ENCODE measurements at regions of chr16 and their contacts with region 1.

Region 1: DNA sequence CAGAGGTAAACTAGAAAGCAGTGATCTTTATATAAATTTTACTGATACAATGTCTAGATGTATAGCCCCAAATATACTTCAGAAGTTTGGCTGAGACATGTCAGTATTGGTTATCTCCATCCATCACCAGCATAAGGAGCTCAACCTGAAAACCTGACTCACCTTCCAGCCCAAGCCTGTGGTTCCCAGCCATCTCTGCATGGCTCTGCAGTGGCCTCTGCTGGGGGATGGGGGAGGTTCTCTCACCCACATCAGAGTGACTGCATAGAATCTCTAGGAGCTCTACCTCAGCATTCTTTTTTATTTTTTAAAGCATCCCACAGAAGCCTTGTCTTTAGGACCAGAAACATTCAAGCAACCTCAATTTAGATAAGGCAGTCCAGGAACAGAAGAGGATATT is 27.3 kb downstream of the USP7 start:
- DNase-seq: peak; percentile 68
- H3K4me3 ChIP-seq: no peak overlapping the region; a peak in 1 of 4 replicates
- H3K27ac ChIP-seq: no peak overlapping the region
- H3K4me1 ChIP-seq: peaks cover 0 to 7% of the 10 kb centered on the region in 2 experiments; a peak in 1 of 4 replicates
- H3K27me3 ChIP-seq: no peaks in the 10 kb centered on the region
- CTCF ChIP-seq: peak; percentile 54
- EP300 ChIP-seq: no peak
- RAD21 ChIP-seq: peak; percentile 54

Region 2: GRCh38 chr16:8910811-8911210 is 25.6 kb before region 1 on chr16:
- CTCF ChIA-PET with region 1: interaction called, 10 read pairs
- POLR2A ChIA-PET with region 1: no interaction called
- DNase-seq: no peak
- H3K4me3 ChIP-seq: no peak overlapping the region
- H3K27ac ChIP-seq: no peak overlapping the region
- H3K4me1 ChIP-seq: no peaks in the 10 kb centered on the region; a peak in 1 of 4 replicates
- H3K27me3 ChIP-seq: no peaks in the 10 kb centered on the region
- CTCF ChIP-seq: no peak
- EP300 ChIP-seq: no peak
- RAD21 ChIP-seq: no peak

Region 3: DNA sequence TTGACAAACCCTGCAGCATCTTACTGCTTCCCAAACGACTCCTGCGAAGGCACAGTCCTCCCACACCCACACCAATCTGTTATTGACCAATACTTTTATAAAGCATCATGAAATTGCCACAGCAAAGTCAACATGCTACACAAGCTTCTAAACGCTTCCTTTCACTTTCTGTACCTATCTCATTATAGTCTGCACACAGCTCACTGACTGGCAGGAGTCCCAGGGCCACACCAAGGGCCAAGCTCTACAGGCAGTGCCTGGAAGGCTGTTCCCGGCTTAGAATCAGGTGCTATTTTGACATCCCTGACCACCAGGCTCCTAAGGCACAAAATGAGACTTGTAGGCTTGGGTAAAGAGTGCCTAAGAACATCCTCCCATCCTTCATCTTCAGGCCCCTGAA is 12.2 kb before region 1 on chr16:
- CTCF ChIA-PET with region 1: interaction called, 14 read pairs
- POLR2A ChIA-PET with region 1: no interaction called
- DNase-seq: no peak
- H3K4me3 ChIP-seq: no peak overlapping the region
- H3K27ac ChIP-seq: no peak overlapping the region; a peak in 1 of 4 replicates
- H3K4me1 ChIP-seq: no peaks in the 10 kb centered on the region; a peak in 1 of 4 replicates
- H3K27me3 ChIP-seq: no peaks in the 10 kb centered on the region
- CTCF ChIP-seq: no peak
- EP300 ChIP-seq: no peak
- RAD21 ChIP-seq: no peak

Region 4: DNA sequence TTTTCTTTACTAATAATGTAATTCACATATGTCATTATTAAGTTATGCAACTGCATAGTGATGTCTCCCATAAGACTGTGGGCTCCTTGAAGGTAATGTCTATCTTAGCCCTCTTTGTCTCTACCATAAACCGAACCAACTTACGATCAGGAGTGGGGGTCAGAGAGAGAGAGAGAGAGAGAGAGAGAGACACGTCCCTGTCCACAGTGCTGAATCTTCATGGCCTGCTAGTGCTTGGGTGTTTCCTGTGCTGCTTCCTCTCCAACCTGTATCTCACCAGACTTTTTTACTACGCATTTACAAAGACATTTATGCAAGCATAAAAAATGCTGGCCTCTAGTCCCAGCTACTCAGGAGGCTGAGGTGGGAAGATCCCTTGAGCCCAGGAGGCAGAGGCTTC is 102.8 kb after region 1 on chr16:
- CTCF ChIA-PET with region 1: no interaction called
- POLR2A ChIA-PET with region 1: no interaction called
- DNase-seq: no peak
- H3K4me3 ChIP-seq: no peak overlapping the region
- H3K27ac ChIP-seq: no peak overlapping the region
- H3K4me1 ChIP-seq: no peaks in the 10 kb centered on the region
- H3K27me3 ChIP-seq: no peaks in the 10 kb centered on the region
- CTCF ChIP-seq: no peak
- EP300 ChIP-seq: no peak
- RAD21 ChIP-seq: no peak